Caco-2 (cell line): ENCODE measurements at regions of chr12 and their contacts with region 1.

Region 1: DNA sequence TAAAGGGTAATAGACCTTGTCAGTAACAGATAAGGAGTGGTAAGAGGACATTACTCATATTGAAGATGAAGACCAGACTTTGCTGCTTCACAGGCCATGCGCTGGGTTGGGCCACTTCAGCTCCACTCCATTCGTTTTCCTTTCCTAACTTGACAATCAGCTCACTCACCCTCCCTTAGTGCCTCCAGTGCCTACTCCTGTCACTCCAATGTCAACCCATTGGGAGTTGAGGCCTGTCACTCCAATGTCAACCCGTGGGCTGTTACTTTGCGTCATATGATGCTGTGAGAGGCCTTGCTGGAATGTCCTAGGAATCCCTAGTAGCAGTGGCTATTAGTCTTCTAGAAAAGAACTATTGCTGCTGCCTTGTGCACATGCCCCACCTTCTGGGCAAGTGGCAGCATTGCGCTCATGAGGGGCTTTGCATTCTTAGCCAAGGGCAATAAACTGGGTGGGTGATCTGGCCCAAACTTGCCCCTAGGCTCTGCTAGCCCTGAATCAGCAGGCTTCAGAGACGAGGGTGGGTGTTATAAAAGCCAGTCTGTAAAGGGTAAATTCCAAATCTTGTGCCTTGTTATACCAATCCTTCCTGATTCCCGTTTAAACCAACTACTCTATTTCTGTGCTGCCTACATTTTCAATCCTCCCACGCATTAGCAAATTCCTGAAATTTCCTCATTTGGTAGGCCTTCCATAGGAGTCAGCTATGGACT is 36.1 kb downstream of the BAZ2A start:
- DNase-seq: peak; percentile 76 to 82
- H3K4me3 ChIP-seq: no peak overlapping the region
- H3K4me3 Mint-ChIP-seq: no peak overlapping the region
- H3K27ac Mint-ChIP-seq: peak overlapping the region; percentile 81
- H3K4me1 ChIP-seq: peaks cover 6% of the 10 kb centered on the region; the same call in 1 of the 2 replicates
- H3K4me1 Mint-ChIP-seq: peaks cover 14% of the 10 kb centered on the region
- H3K27me3 ChIP-seq: no peaks in the 10 kb centered on the region
- H3K27me3 Mint-ChIP-seq: no peaks in the 10 kb centered on the region
- CTCF ChIP-seq: peak; percentile 84 to 85

Region 2: GRCh38 chr12:56490360-56490759 is 103.7 kb before region 1 on chr12:
- CTCF ChIA-PET with region 1: no interaction called
- POLR2A ChIA-PET with region 1: no interaction called
- intact Hi-C with region 1: loop called (anchors 5 kb)
- DNase-seq: no peak
- H3K4me3 ChIP-seq: no peak overlapping the region
- H3K4me3 Mint-ChIP-seq: no peak overlapping the region
- H3K27ac Mint-ChIP-seq: no peak overlapping the region
- H3K4me1 ChIP-seq: no peaks in the 10 kb centered on the region
- H3K4me1 Mint-ChIP-seq: no peaks in the 10 kb centered on the region
- H3K27me3 ChIP-seq: no peaks in the 10 kb centered on the region
- H3K27me3 Mint-ChIP-seq: peaks cover 4% of the 10 kb centered on the region
- CTCF ChIP-seq: no peak